Stomach (tissue), 19 donors: ENCODE measurements at regions of chr20 and their contacts with region 1.

Region 1: DNA sequence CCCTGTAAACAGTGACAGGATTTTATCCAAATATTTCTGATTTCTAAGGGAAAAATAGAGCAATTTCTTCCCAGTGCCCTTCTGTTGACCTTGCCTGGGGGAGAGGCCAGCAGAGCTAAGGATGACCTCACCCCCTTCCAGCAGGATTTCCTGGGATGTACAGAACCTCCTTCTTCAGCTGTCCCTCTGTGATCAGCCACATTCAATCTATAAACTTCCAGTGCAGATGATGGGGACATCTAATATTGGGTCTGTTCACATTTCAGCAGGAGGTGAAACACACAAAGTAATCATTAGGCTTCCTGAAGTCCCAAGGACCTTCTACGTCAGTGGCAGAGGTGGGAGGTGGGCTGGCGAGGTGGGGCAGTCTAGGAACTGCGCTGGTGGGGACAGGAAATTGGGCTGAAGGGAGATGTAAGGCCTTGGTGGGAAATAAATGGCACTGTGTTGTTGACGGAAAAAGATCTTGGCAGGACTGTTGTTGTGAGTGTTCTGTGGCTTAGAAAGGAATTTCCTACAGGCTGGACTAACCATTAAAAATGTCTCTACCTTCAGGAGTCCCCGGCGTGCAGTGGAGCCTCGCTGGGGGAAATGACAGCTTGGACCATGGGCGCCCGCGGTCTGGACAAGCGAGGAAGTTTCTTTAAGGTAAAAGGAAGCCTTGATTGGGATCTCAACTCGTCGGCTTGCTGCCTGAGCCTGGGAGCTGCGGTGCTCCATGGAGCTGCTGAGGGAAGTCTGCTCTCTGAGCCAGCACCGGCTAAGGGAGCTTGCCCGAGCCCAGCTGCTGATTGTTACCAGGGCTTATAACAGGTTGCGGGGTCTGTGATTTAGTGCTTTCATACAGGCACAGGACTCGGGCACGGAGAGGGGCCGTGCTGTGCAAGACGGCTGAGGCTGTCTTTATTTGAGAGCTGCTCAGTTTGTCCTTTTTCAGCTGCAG is 127.9 kb upstream of the NAA20 start:
- DNase-seq: peak in 1 of 2 donors; percentile 64
- H3K4me3 ChIP-seq: peak overlapping the region; percentile 2 to 35 (median 23)
- H3K27ac ChIP-seq: peak overlapping the region; percentile 10 to 85 (median 78)
- H3K4me1 ChIP-seq: peaks cover 33 to 66% (median 57%) of the 10 kb centered on the region in 4 donors
- H3K27me3 ChIP-seq: no peaks in the 10 kb centered on the region
- CTCF ChIP-seq: no peak
- EP300 ChIP-seq: no peak
- POLR2A ChIP-seq: no peak

Region 2: DNA sequence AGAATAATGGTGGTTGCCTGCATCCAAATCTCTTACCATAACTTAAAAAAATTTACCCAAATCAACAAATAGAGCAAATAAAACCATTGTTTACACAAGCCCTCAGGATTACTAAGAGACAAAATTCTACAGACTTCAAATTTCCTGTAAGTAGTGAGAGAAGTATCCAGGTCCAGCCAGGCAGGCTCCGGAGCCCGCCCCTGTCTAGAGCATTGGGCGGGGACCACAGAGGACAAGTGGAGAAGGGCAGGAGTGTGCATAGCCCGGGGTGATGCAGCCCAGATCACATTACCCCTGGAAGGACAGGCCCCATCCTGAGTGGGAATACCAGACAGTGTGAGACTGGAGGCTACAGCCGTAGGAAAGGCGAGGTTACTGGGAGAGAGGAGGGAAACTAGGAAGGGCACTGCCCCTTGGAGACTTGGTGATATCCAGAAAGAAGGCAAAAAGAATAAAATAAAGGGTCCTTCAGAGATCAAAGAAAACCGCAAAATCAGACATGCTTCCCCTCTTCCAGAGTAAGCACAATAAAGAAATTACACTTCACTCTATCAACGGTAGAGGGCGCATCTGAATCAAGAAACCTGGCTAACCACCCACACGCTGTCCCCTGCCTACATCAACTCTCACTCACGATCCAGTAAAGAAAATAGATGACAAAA is 104.6 kb before region 1 on chr20:
- intact Hi-C with region 1: loop called (anchors 10 kb)
- DNase-seq: peak; percentile 38 to 90
- H3K4me3 ChIP-seq: no peak overlapping the region
- H3K27ac ChIP-seq: peak overlapping the region; percentile 12 to 60 (median 38)
- H3K4me1 ChIP-seq: peaks cover 16 to 33% (median 29%) of the 10 kb centered on the region in 4 donors
- H3K27me3 ChIP-seq: no peaks in the 10 kb centered on the region
- CTCF ChIP-seq: peak in 5 of 7 experiments; percentile 60 to 80 (median 73)
- EP300 ChIP-seq: no peak
- POLR2A ChIP-seq: no peak

Region 3: DNA sequence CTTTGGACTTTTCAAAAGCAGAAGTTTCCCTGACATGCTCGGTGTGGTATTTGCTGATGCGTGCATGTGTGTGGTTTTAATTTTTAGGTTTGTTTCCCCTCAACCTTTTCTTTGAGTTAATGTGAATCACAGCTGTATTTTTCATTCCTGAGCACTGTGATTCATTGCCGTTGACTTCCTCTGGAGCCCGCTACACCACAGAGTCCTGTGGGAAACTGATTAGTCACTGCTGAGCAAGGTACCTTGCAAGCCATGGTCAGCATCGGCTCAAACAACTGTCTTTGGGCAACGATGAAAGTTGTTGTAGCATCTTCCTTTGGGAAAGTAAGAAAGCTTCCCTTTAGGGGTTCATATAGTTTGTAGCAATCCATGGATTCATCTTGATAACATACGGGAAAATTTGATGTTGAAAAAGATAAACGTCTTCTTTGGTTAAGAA is 73.7 kb before region 1 on chr20:
- intact Hi-C with region 1: no loop called
- DNase-seq: peak in 1 of 2 donors; percentile 41
- H3K4me3 ChIP-seq: no peak overlapping the region
- H3K27ac ChIP-seq: peak overlapping the region in 4 of 5 donors; percentile 43 to 69 (median 60)
- H3K4me1 ChIP-seq: peaks cover 8 to 32% (median 20%) of the 10 kb centered on the region in 4 donors
- H3K27me3 ChIP-seq: no peaks in the 10 kb centered on the region
- CTCF ChIP-seq: no peak
- EP300 ChIP-seq: no peak
- POLR2A ChIP-seq: no peak